MCF 10A (cell line): ENCODE measurements at regions of chr1 and their contacts with region 1.

Region 1: GRCh38 chr1:85307987-85308832 is 31.8 kb upstream of the BCL10 start:
- DNase-seq: peak; percentile 90
- H3K4me3 Mint-ChIP-seq: no peak overlapping the region
- H3K27ac Mint-ChIP-seq: no peak overlapping the region
- H3K4me1 Mint-ChIP-seq: peaks cover 1% of the 10 kb centered on the region
- H3K27me3 Mint-ChIP-seq: no peaks in the 10 kb centered on the region
- CTCF ChIP-seq: peak; percentile 94

Region 2: GRCh38 chr1:84810343-84810742 is 497.9 kb before region 1 on chr1:
- CTCF ChIA-PET with region 1: no interaction called
- POLR2A ChIA-PET with region 1: no interaction called
- intact Hi-C with region 1: no loop called
- DNase-seq: no peak
- H3K4me3 Mint-ChIP-seq: no peak overlapping the region
- H3K27ac Mint-ChIP-seq: no peak overlapping the region
- H3K4me1 Mint-ChIP-seq: no peaks in the 10 kb centered on the region
- H3K27me3 Mint-ChIP-seq: no peaks in the 10 kb centered on the region
- CTCF ChIP-seq: no peak

Region 3: DNA sequence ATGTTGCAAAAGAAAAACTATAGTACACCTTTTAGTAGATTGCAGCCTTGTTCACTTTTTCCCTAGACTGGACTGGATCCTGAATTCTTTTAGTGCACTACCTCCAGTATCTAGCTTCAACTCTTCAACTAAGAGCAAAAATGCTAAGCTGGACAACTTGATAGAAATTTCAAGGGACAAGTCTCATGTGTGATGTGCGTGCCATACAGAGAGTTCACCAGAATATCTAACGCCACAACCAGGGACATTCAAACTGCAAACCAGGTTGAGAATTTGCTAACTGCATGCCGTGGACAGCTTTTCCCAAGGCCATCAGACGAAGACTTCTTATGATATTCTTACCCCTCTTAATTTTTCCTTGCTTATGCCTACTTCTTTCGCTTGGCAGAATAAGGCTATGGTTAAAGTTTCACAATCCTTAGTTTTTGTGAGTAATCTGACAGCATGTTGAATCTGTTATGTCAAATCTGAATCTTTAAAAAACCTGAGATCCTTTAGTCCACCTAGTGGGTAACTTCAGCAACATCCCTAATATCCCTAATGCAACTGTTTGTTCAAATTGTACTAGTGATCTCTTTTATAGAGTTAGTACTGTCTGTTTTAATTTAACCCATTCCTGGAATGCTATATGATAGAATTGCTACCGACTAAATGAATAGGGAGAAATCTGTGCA is 90.3 kb after region 1 on chr1:
- CTCF ChIA-PET with region 1: interaction called, 9 read pairs
- POLR2A ChIA-PET with region 1: interaction called, 3 read pairs
- intact Hi-C with region 1: loop called (anchors 1 kb)
- DNase-seq: peak; percentile 66
- H3K4me3 Mint-ChIP-seq: no peak overlapping the region
- H3K27ac Mint-ChIP-seq: no peak overlapping the region
- H3K4me1 Mint-ChIP-seq: peaks cover 7% of the 10 kb centered on the region
- H3K27me3 Mint-ChIP-seq: no peaks in the 10 kb centered on the region
- CTCF ChIP-seq: peak; percentile 44

Region 4: DNA sequence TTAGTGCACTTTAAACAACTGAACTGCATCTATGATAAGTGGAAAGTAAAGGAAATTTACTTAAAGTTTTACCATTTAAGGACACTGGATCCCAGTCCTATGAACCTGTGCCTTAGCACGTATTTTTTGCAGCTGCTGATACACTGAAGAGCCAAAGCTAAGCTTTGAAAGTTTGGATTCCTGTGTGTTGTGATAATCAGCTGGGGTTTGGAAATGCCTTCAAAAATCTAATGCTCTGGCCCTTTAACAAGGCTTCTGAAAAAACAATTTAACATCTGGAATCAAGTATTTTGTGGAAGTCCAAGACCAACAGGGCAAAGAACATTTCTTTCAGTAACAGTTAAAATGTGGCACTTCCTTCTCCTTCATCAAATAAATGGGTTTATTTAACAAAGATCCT is 105.0 kb after region 1 on chr1:
- CTCF ChIA-PET with region 1: no interaction called
- POLR2A ChIA-PET with region 1: no interaction called
- intact Hi-C with region 1: no loop called
- DNase-seq: no peak
- H3K4me3 Mint-ChIP-seq: no peak overlapping the region
- H3K27ac Mint-ChIP-seq: no peak overlapping the region
- H3K4me1 Mint-ChIP-seq: peaks cover 2% of the 10 kb centered on the region
- H3K27me3 Mint-ChIP-seq: no peaks in the 10 kb centered on the region
- CTCF ChIP-seq: no peak

Region 5: GRCh38 chr1:85628791-85629531 is 320.8 kb after region 1 on chr1:
- CTCF ChIA-PET with region 1: interaction called, 11 read pairs
- POLR2A ChIA-PET with region 1: no interaction called
- intact Hi-C with region 1: no loop called
- DNase-seq: peak; percentile 68
- H3K4me3 Mint-ChIP-seq: peak overlapping the region; percentile 24
- H3K27ac Mint-ChIP-seq: peak overlapping the region; percentile 91
- H3K4me1 Mint-ChIP-seq: peaks cover 12% of the 10 kb centered on the region
- H3K27me3 Mint-ChIP-seq: no peaks in the 10 kb centered on the region
- CTCF ChIP-seq: no peak

Region 6: GRCh38 chr1:85850238-85850637 is 542.0 kb after region 1 on chr1:
- CTCF ChIA-PET with region 1: no interaction called
- POLR2A ChIA-PET with region 1: no interaction called
- intact Hi-C with region 1: loop called (anchors 1 kb)
- DNase-seq: peak; percentile 85
- H3K4me3 Mint-ChIP-seq: peak overlapping the region; percentile 41
- H3K27ac Mint-ChIP-seq: peak overlapping the region; percentile 93
- H3K4me1 Mint-ChIP-seq: peaks cover 11% of the 10 kb centered on the region
- H3K27me3 Mint-ChIP-seq: no peaks in the 10 kb centered on the region
- CTCF ChIP-seq: no peak